Activated CD8-positive, alpha-beta T cell treated with anti-CD3 and anti-CD28 coated beads, Interleukin-2, amount 10 ng/mL, durations not matched to agents 7 days and 5 days (primary cell): ENCODE measurements at regions of chr15 and their contacts with region 1.

Region 1: DNA sequence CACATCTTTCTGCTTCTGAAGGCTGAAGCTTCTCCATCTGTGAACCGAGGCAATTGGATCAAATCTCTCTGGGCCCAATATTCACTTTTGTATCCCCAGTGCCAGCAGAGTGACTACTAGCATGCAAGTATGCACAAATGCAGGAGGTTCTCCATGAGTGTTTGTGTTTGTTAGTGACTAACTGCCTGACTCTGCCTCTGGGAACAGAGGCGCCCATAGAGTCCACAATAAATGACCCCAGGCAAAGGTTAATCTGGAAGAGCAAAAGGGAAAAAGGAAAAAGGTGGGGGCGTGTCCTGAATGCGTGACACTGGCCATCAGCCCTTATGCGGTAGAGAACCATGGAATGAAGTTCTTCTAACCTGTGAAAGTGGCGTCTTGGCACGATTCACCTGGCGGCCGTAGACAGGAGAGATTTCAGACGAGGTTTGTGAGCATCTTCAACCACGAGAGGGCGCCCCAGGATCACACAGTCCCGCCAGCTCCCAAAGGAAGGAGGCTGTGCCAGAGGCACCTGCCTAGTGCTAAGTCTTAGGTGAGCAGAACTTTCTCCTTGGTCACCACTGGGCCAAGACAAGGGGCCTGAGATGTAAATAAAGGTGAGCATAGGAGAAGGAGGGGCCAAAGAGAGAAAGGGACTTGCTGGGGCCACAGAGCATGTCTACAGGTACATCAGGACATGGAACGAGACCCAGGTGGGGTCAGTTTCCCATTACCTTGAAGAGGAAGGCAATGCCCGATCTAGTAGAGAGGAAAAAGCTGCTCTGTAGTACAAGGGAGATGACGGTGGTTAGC is 44.2 kb downstream of the RBPMS2 start:
- DNase-seq: peak; percentile 90
- ATAC-seq: peak; percentile 87
- H3K4me3 Mint-ChIP-seq: no peak overlapping the region
- H3K27ac Mint-ChIP-seq: no peak overlapping the region
- H3K4me1 Mint-ChIP-seq: peaks cover 1% of the 10 kb centered on the region
- H3K27me3 Mint-ChIP-seq: peaks cover 1% of the 10 kb centered on the region

Region 2: GRCh38 chr15:64681424-64682024 is 49.7 kb before region 1 on chr15:
- CTCF ChIA-PET with region 1: interaction called, 98 read pairs
- POLR2A ChIA-PET with region 1: no interaction called
- DNase-seq: peak; percentile 32
- ATAC-seq: no peak
- H3K4me3 Mint-ChIP-seq: no peak overlapping the region
- H3K27ac Mint-ChIP-seq: peak overlapping the region; percentile 43
- H3K4me1 Mint-ChIP-seq: no peaks in the 10 kb centered on the region
- H3K27me3 Mint-ChIP-seq: no peaks in the 10 kb centered on the region

Region 3: DNA sequence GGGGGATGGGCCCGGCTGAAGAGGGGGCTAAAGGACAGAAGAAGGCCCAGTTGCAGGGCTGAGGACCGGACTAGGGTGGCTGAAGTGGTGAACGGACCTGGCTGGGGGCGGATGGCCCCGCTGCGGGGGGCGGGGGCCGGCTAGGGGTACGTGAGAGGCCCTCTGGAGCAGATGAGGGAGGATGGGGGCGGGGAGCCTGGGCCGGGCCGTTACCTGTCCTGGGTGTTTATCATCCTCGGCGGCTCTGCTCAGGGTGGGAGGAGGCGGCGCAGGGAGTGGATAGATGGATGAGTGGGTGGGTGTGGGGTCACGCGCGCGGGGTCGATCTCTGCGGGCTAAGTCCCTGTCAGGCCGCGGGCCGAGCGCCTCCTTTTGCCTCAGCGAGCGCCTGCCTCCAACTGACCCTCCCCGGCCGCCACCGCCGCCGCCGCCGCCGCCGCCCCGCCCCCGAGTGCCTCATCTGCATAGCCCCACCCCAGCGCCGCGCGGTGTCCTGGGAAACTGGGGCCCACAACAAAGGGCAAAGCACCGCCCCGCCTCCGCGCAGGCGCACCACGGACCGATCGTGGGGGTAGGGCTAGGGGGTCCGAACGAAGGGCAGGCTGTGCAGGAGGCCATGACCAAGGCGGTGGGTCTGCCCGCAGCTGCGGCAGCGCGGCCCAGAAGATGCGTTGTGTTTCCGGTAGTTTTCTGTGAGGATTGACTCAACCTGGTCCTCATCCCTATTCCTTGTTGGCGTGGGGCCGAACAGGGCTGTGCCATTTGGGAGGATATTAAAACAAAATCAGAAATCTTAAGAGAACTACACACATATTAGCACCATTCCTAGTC is 28.2 kb before region 1 on chr15:
- CTCF ChIA-PET with region 1: interaction called, 16 read pairs
- POLR2A ChIA-PET with region 1: no interaction called
- DNase-seq: peak; percentile 96
- ATAC-seq: peak; percentile 92
- H3K4me3 Mint-ChIP-seq: peak overlapping the region; percentile 62
- H3K27ac Mint-ChIP-seq: peak overlapping the region; percentile 80
- H3K4me1 Mint-ChIP-seq: peaks cover 50% of the 10 kb centered on the region
- H3K27me3 Mint-ChIP-seq: no peaks in the 10 kb centered on the region

Region 4: GRCh38 chr15:64809649-64810496 is 78.7 kb after region 1 on chr15:
- CTCF ChIA-PET with region 1: interaction called, 49 read pairs
- POLR2A ChIA-PET with region 1: no interaction called
- DNase-seq: peak; percentile 82
- ATAC-seq: peak; percentile 87
- H3K4me3 Mint-ChIP-seq: no peak overlapping the region
- H3K27ac Mint-ChIP-seq: no peak overlapping the region
- H3K4me1 Mint-ChIP-seq: no peaks in the 10 kb centered on the region
- H3K27me3 Mint-ChIP-seq: peaks cover 6% of the 10 kb centered on the region

Region 5: DNA sequence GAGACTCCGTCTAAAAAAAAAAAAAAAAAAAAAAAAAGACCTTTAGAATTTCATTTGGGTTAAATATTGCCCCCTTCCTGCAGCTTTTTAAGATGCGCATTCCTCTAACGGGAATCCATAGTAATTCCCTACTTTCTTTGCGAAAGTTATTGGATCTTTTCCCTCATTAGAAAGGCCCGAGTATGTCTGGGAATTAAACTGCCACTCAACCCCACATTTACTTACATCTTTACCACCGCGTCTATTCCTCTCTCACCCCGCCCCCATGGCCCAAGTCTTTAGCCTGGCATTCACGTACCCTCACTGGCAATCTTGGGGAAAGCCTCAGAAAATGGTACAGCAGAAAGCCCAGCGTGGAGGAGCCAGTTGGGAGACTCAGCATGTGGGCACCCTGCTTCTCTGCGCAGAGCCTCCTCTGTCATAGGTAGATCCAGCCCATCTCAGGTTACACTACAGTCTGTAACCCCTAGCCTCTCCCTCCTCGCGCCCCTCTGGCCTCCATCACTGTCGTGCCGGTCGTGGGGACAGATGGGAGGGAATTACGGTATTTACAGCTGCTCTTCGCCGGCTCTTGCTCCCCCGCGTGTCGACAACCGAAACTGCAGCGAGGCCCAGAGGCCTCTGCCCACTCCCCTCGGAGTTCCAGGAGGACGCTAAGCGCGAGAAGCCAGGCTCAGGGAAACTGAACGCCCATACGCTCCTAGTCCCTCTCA is 174.1 kb after region 1 on chr15:
- CTCF ChIA-PET with region 1: interaction called, 22 read pairs
- POLR2A ChIA-PET with region 1: no interaction called
- DNase-seq: peak; percentile 84
- ATAC-seq: peak; percentile 90
- H3K4me3 Mint-ChIP-seq: peak overlapping the region; percentile 54
- H3K27ac Mint-ChIP-seq: peak overlapping the region; percentile 43
- H3K4me1 Mint-ChIP-seq: peaks cover 40% of the 10 kb centered on the region
- H3K27me3 Mint-ChIP-seq: no peaks in the 10 kb centered on the region